AG04450 (cell line): ENCODE measurements at regions of chr15 and their contacts with region 1.

Region 1: GRCh38 chr15:71066983-71067382 is 48.3 kb upstream of the THSD4 start:
- DNase-seq: peak; percentile 88
- H3K4me3 ChIP-seq: no peak overlapping the region
- H3K27ac ChIP-seq: peak overlapping the region; percentile 40
- H3K27me3 ChIP-seq: no peaks in the 10 kb centered on the region
- CTCF ChIP-seq: no peak

Region 2: DNA sequence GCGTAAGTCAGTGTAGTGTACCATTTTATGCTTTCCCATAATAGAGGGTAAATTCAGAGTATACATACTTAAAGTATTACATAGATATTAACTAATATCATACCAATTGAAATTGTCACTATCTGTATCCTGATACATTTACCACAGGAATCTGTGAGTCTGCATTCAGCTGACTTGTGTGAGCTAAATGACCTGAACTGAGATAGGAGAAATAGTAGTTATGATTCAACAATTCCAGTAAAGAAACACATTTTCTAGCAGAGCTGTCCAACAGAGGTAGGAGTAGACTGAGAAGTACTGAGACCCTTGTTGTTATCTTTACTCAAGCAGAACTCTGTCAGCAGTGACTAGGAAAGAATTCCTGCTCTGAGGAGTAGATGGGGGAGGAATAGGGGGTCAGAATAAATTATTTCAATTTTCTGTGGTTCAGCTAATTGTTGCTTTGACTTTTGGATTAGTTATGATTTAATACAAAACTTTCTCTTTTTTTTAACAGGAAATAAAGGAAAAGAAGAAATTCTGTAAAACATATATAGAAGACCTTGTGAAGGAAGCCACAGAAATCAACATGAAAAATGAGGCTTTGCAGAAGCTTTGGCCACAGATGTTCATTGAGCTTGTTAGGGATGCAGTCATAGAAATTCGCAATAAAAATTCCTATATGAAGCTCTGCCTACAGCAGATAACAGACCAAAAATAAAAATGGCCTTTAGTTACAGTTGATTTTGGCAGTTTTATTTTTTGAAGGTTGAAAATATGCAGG is 17.9 kb before region 1 on chr15:
- CTCF ChIA-PET with region 1: no interaction called
- POLR2A ChIA-PET with region 1: interaction called, 13 read pairs
- DNase-seq: peak; percentile 92
- H3K4me3 ChIP-seq: no peak overlapping the region
- H3K27ac ChIP-seq: peak overlapping the region; percentile 97
- H3K27me3 ChIP-seq: no peaks in the 10 kb centered on the region
- CTCF ChIP-seq: no peak